K562 (cell line): ENCODE measurements at regions of chr16 and their contacts with region 1.

Region 1: GRCh38 chr16:27242868-27243590 is 25.5 kb downstream of the NSMCE1 start:
- DNase-seq: peak in 3 of 4 experiments; percentile 24 to 75 (median 65)
- ATAC-seq: peak; percentile 85
- H3K4me3 ChIP-seq: no peak overlapping the region
- H3K27ac ChIP-seq: peak overlapping the region; percentile 33; the same call in 1 of the 3 replicates
- H3K4me1 ChIP-seq: peaks cover 9 to 46% of the 10 kb centered on the region in 2 experiments
- H3K27me3 ChIP-seq: no peaks in the 10 kb centered on the region
- CTCF ChIP-seq: no peak
- EP300 ChIP-seq: 0 out of 2 replicates have a peak, but pooled peaks have one; percentile 27
- POLR2A ChIP-seq: no peak
- RAD21 ChIP-seq: no peak

Region 2: DNA sequence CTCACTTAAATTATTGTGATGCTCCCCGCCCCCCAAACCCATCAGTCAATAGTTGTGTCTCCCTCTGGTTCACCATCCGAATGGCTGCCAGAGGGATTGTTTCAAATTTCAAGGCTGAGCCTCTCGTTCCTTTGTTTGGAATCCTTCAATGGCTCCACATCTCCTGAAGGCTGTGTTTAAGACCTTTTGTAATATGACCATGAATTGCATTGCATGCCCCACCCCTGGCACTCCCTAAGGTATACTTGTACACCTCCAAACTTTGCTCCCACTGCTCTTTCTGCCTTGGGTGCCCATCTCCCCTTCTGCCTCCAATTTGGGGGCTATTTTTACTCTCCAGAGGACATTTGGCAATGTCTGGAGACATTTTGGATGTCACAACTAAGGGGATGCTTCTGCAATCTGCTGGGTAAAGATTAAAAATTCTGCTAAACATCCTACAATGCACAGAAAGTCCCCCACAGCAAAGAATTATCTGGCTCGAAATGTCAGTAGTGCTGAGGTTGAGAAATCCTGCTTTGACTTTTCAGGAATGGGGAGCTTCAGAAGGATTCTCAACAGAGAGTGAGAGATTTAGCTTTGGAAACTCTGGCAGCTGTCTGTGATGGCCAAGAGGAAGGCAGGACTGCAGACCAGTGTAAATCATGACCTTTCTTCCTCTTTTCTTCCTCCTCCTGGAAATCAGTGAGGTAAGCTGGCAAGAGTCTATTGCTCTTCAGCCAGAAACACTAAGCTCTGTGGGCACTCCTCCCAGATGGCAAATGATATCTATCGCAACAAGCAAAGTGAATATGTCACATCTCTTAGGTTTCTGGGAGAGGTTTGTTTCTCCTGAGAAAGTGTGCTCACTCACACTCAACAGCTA is 62.1 kb after region 1 on chr16:
- CTCF ChIA-PET with region 1: no interaction called
- POLR2A ChIA-PET with region 1: no interaction called
- in situ Hi-C with region 1: loop called (anchors 5 kb)
- intact Hi-C with region 1: no loop called
- DNase-seq: no peak
- ATAC-seq: no peak
- H3K4me3 ChIP-seq: no peak overlapping the region
- H3K27ac ChIP-seq: no peak overlapping the region
- H3K4me1 ChIP-seq: no peaks in the 10 kb centered on the region
- H3K27me3 ChIP-seq: peaks cover 2 to 12% of the 10 kb centered on the region in 2 experiments; a peak in 2 of 5 replicates
- CTCF ChIP-seq: no peak
- EP300 ChIP-seq: no peak
- POLR2A ChIP-seq: no peak
- RAD21 ChIP-seq: no peak